Heart left ventricle (tissue), 16 donors: ENCODE measurements at regions of chr2 and their contacts with region 1.

Region 1: GRCh38 chr2:46569061-46569560 is 89.7 kb downstream of the TMEM247 start:
- DNase-seq: peak in 1 of 5 donors; percentile 33
- ATAC-seq: peak; percentile 27 to 53 (median 31)
- H3K4me3 ChIP-seq: peak overlapping the region in 4 of 12 donors; percentile 0 to 2 (median 2)
- H3K27ac ChIP-seq: peak overlapping the region; percentile 53 to 90 (median 78)
- H3K4me1 ChIP-seq: peaks cover 9 to 99% (median 87%) of the 10 kb centered on the region in 12 donors
- H3K27me3 ChIP-seq: no peaks in the 10 kb centered on the region
- CTCF ChIP-seq: no peak
- POLR2A ChIP-seq: peak in 1 of 2 donors; percentile 24

Region 2: GRCh38 chr2:46589358-46589757 is 20.2 kb after region 1 on chr2:
- intact Hi-C with region 1: loop called in 1 of 10 experiments (anchors 2 kb)
- DNase-seq: no peak
- ATAC-seq: no peak
- H3K4me3 ChIP-seq: no peak overlapping the region
- H3K27ac ChIP-seq: no peak overlapping the region
- H3K4me1 ChIP-seq: peaks cover 0 to 2% (median 0%) of the 10 kb centered on the region in 12 donors
- H3K27me3 ChIP-seq: no peaks in the 10 kb centered on the region
- CTCF ChIP-seq: no peak
- POLR2A ChIP-seq: no peak

Region 3: GRCh38 chr2:46857893-46858701 is 289.0 kb after region 1 on chr2:
- intact Hi-C with region 1: no loop called
- DNase-seq: no peak
- ATAC-seq: no peak
- H3K4me3 ChIP-seq: no peak overlapping the region
- H3K27ac ChIP-seq: peak overlapping the region in 4 of 12 donors; percentile 8 to 71 (median 48)
- H3K4me1 ChIP-seq: peaks cover 3 to 40% (median 18%) of the 10 kb centered on the region in 12 donors
- H3K27me3 ChIP-seq: no peaks in the 10 kb centered on the region
- CTCF ChIP-seq: no peak
- POLR2A ChIP-seq: no peak

Region 4: GRCh38 chr2:47309952-47310800 is 741.1 kb after region 1 on chr2:
- intact Hi-C with region 1: loop called in 1 of 10 experiments (anchors 5 kb)
- DNase-seq: peak in 3 of 5 donors; percentile 30 to 43 (median 40)
- ATAC-seq: peak; percentile 56 to 63 (median 60)
- H3K4me3 ChIP-seq: no peak overlapping the region
- H3K27ac ChIP-seq: peak overlapping the region; percentile 19 to 78 (median 73)
- H3K4me1 ChIP-seq: peaks cover 3 to 42% (median 21%) of the 10 kb centered on the region in 12 donors
- H3K27me3 ChIP-seq: no peaks in the 10 kb centered on the region
- CTCF ChIP-seq: no peak
- POLR2A ChIP-seq: no peak